Activated CD4-positive, alpha-beta T cell treated with anti-CD3 and anti-CD28 coated beads, Interleukin-2, amount 10 ng/mL, durations not matched to agents 7 days and 5 days (primary cell): ENCODE measurements at regions of chr15 and their contacts with region 1.

Region 1: DNA sequence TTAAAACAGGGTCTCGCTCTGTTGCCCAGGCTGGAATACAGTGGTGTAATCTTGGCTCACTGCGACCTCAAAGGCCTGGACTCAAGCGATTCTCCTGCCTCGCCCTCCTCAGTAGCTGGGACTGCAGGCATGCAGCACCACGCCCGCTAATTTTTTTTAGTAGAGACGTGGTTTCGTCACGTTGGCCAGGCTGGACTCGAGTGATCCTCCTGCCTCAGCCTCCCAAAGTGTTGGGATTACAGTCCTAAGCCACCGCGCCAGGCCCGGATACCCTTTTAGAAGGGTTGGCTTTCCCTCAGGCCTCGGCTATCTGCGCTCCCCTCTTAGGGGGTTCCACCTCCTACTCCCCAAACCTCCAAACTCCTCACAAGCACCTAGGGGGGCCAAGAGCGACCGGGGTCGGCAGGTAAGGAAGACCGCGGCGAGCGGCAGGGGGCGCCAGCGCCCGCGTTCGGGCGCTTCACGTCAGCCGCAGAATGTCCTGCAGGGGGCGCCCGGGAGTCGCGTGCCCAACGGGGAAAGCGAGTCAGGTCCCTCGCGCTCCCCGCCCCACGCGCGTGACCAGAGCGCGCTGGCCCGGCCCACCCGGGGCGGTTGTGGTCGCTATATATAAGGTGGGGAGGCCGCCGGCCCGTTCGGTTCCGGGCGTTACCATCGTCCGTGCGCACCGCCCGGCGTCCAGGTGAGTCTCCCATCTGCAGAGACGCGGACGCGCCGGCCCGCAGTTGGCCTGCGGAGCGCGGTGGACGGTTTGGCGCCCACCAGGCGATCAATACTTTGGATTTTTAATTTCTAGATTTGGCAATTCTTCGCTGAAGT is 51.8 kb upstream of the GATM start:
- DNase-seq: peak; percentile 87
- H3K4me3 Mint-ChIP-seq: peak overlapping the region; percentile 50
- H3K27ac Mint-ChIP-seq: no peak overlapping the region
- H3K4me1 Mint-ChIP-seq: peaks cover 5% of the 10 kb centered on the region
- H3K27me3 Mint-ChIP-seq: peaks cover 26% of the 10 kb centered on the region

Region 2: DNA sequence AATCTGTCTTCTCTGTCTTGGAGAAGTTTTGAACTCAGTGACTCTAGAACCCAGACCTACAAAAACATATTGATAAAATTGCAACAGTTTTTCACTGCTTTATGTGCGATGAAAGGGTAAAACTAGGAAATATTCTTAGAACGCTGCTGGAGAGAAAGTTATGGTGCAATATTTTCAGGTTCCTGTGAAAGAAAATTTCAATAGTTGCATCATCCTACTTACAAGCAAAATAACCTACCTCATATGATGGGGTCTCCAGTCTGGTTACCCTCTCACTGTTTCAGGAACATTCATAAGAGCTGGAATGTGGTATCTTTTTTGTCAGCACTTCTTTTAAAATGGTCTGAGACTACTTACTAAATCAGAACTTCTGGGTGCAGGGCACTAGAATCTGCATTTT is 79.0 kb before region 1 on chr15:
- CTCF ChIA-PET with region 1: no interaction called
- POLR2A ChIA-PET with region 1: no interaction called
- DNase-seq: no peak
- H3K4me3 Mint-ChIP-seq: no peak overlapping the region
- H3K27ac Mint-ChIP-seq: no peak overlapping the region
- H3K4me1 Mint-ChIP-seq: no peaks in the 10 kb centered on the region
- H3K27me3 Mint-ChIP-seq: peaks cover 39% of the 10 kb centered on the region

Region 3: DNA sequence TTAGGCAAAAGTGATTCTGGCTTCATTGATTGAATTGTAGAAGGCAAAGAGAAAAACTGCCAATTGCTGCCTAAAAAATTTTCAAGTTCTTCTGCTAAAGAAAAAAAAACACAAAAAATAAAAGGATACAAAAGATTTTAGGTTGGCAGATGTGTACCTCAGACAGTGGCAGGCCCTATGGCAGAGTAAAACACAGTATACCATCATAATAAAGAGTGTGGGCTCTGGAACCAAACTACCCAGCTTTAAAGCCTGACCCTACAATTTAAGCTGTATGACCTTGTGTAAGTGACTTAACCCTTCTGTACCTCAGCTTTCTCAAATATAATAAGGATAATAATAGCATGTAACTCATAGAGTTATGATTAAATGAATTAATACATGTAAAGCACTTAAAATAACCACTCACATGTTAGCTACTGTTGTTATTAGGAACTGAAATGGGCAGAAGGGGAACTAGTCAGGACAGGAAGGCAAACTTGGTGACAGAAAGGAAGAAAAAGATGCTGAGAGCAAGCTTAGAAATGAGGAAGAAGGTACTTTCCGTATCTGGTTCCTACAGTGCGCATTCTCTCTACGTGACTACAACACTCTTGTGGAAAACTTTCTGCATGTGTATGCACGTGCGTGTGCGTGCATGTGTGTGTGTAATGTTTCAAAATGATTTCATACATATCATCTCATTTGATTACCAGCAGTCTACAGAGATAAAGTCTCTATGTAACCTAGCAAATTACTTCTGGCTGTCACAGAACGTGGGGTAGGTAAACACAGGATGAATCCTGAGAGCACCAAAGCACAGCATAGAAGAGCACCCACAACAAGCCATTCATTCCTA is 38.2 kb before region 1 on chr15:
- CTCF ChIA-PET with region 1: no interaction called
- POLR2A ChIA-PET with region 1: no interaction called
- DNase-seq: no peak
- H3K4me3 Mint-ChIP-seq: no peak overlapping the region
- H3K27ac Mint-ChIP-seq: no peak overlapping the region
- H3K4me1 Mint-ChIP-seq: no peaks in the 10 kb centered on the region
- H3K27me3 Mint-ChIP-seq: peaks cover 4% of the 10 kb centered on the region

Region 4: GRCh38 chr15:45442500-45443135 is 12.4 kb after region 1 on chr15:
- CTCF ChIA-PET with region 1: interaction called, 13 read pairs
- POLR2A ChIA-PET with region 1: no interaction called
- DNase-seq: no peak
- H3K4me3 Mint-ChIP-seq: no peak overlapping the region
- H3K27ac Mint-ChIP-seq: no peak overlapping the region
- H3K4me1 Mint-ChIP-seq: no peaks in the 10 kb centered on the region
- H3K27me3 Mint-ChIP-seq: peaks cover 5% of the 10 kb centered on the region